ENCODE measurements at regions of chr2 and their contacts with region 1.

Region 1: GRCh38 chr2:18520451-18521425 is 39.7 kb downstream of the RDH14 start:
- DNase-seq: peak; percentile 63
- ATAC-seq: peak; percentile 61
- H3K4me3 Mint-ChIP-seq: no peak overlapping the region
- H3K27ac Mint-ChIP-seq: no peak overlapping the region
- H3K4me1 Mint-ChIP-seq: no peaks in the 10 kb centered on the region
- H3K27me3 Mint-ChIP-seq: peaks cover 19% of the 10 kb centered on the region
- CTCF ChIP-seq: peak; percentile 79

Region 2: DNA sequence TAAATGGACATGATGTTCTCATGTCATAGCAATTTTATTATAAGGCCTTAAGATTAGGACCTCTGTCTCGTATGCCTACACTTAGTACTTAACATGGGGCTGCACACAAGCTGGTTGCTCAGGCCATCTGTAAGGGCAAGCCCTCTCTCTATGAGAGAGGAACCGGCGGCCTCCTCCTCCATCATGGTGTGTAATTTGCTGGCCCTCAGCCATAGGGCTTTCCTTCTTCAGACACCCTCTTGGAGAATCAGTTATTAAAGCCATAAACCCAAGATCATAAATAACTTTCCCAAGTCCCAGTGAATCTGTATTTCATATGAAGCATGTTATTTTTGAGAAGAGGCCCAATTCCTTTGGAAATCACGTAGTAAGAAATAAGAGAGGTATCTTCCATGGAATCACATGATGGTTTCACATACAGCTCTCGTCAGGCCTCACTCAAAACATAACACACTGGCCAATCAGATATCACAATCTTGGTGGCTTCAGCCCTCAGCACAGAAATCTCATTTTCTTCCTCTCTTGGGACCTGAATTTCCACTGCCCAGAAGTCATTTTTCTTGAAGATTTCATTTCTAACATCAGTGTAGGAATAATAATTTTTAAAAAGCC is 52.9 kb before region 1 on chr2:
- CTCF ChIA-PET with region 1: no interaction called
- POLR2A ChIA-PET with region 1: no interaction called
- intact Hi-C with region 1: no loop called
- DNase-seq: no peak
- ATAC-seq: no peak
- H3K4me3 Mint-ChIP-seq: no peak overlapping the region
- H3K27ac Mint-ChIP-seq: no peak overlapping the region
- H3K4me1 Mint-ChIP-seq: no peaks in the 10 kb centered on the region
- H3K27me3 Mint-ChIP-seq: peaks cover 2% of the 10 kb centered on the region
- CTCF ChIP-seq: no peak

Region 3: DNA sequence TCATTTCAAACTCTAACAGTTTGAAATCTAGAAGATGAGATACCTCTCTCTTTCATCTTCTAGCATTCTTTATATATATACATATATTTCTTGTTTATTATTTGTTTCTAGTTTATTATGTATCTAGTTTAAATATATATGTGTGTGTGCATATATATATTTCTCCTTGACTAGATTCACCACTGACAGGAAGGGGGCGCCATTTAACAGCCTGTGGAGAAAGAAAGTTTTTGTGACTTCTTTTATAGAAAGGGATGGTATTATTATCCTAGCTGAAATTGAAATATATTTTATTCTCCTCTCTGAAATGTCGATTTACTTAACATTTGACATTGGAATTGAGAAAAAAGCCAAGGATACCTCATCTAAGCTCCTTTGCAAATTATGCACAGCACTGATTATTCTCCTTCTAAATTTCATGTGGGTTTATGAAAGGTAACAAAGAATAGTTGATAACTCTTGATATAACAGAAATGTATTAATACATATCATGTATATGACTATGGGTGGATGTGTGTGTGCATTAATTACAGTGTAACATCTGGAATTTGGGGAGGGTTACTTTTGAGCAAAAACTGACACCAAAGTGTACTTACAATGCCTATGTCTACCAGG is 229.3 kb after region 1 on chr2:
- CTCF ChIA-PET with region 1: interaction called, 9 read pairs
- POLR2A ChIA-PET with region 1: no interaction called
- intact Hi-C with region 1: loop called (anchors 1 kb)
- DNase-seq: no peak
- ATAC-seq: no peak
- H3K4me3 Mint-ChIP-seq: no peak overlapping the region
- H3K27ac Mint-ChIP-seq: no peak overlapping the region
- H3K4me1 Mint-ChIP-seq: no peaks in the 10 kb centered on the region
- H3K27me3 Mint-ChIP-seq: no peaks in the 10 kb centered on the region
- CTCF ChIP-seq: peak; percentile 61

Region 4: GRCh38 chr2:18883616-18884456 is 363.1 kb after region 1 on chr2:
- CTCF ChIA-PET with region 1: no interaction called
- POLR2A ChIA-PET with region 1: no interaction called
- intact Hi-C with region 1: loop called (anchors 5 kb)
- DNase-seq: no peak
- ATAC-seq: no peak
- H3K4me3 Mint-ChIP-seq: no peak overlapping the region
- H3K27ac Mint-ChIP-seq: no peak overlapping the region
- H3K4me1 Mint-ChIP-seq: no peaks in the 10 kb centered on the region
- H3K27me3 Mint-ChIP-seq: no peaks in the 10 kb centered on the region
- CTCF ChIP-seq: no peak

Region 5: GRCh38 chr2:19377717-19378116 is 857.0 kb after region 1 on chr2:
- CTCF ChIA-PET with region 1: interaction called, 13 read pairs
- POLR2A ChIA-PET with region 1: no interaction called
- intact Hi-C with region 1: loop called (anchors 5 kb)
- DNase-seq: no peak
- ATAC-seq: no peak
- H3K4me3 Mint-ChIP-seq: no peak overlapping the region
- H3K27ac Mint-ChIP-seq: no peak overlapping the region
- H3K4me1 Mint-ChIP-seq: no peaks in the 10 kb centered on the region
- H3K27me3 Mint-ChIP-seq: peaks cover 27% of the 10 kb centered on the region
- CTCF ChIP-seq: no peak

Region 6: GRCh38 chr2:19863303-19864041 is 1342.7 kb after region 1 on chr2:
- CTCF ChIA-PET with region 1: interaction called, 41 read pairs
- POLR2A ChIA-PET with region 1: no interaction called
- intact Hi-C with region 1: no loop called
- DNase-seq: peak; percentile 70
- ATAC-seq: peak; percentile 87
- H3K4me3 Mint-ChIP-seq: no peak overlapping the region
- H3K27ac Mint-ChIP-seq: no peak overlapping the region
- H3K4me1 Mint-ChIP-seq: peaks cover 10% of the 10 kb centered on the region
- H3K27me3 Mint-ChIP-seq: peaks cover 14% of the 10 kb centered on the region
- CTCF ChIP-seq: peak; percentile 82

Region 7: GRCh38 chr2:20097879-20098714 is 1577.4 kb after region 1 on chr2:
- CTCF ChIA-PET with region 1: no interaction called
- POLR2A ChIA-PET with region 1: no interaction called
- intact Hi-C with region 1: loop called (anchors 1 kb)
- DNase-seq: peak; percentile 62
- ATAC-seq: peak; percentile 95
- H3K4me3 Mint-ChIP-seq: no peak overlapping the region
- H3K27ac Mint-ChIP-seq: no peak overlapping the region
- H3K4me1 Mint-ChIP-seq: no peaks in the 10 kb centered on the region
- H3K27me3 Mint-ChIP-seq: peaks cover 12% of the 10 kb centered on the region
- CTCF ChIP-seq: peak; percentile 96

Measured in activated B cell treated with CpG ODN at 0.5 μM for 24 hours (primary cell).